ENCODE measurements at regions of chr4 and their contacts with region 1.

Region 1: GRCh38 chr4:60759518-60760245 is 440.4 kb upstream of the ADGRL3 start:
- DNase-seq: no peak
- H3K4me3 ChIP-seq: no peak overlapping the region
- H3K27ac ChIP-seq: no peak overlapping the region
- H3K4me1 ChIP-seq: no peaks in the 10 kb centered on the region
- H3K27me3 ChIP-seq: no peaks in the 10 kb centered on the region
- CTCF ChIP-seq: peak; percentile 6 to 14

Region 2: GRCh38 chr4:61678297-61678696 is 918.6 kb after region 1 on chr4:
- CTCF ChIA-PET with region 1: interaction called, 10 read pairs
- dilution Hi-C with region 1: no loop called
- in situ Hi-C with region 1: no loop called
- intact Hi-C with region 1: no loop called
- DNase-seq: no peak
- H3K4me3 ChIP-seq: no peak overlapping the region
- H3K27ac ChIP-seq: no peak overlapping the region
- H3K4me1 ChIP-seq: no peaks in the 10 kb centered on the region
- H3K27me3 ChIP-seq: no peaks in the 10 kb centered on the region
- CTCF ChIP-seq: no peak